Gastrocnemius medialis (tissue), 4 donors: ENCODE measurements at regions of chr1 and their contacts with region 1.

Region 1: GRCh38 chr1:30525971-30526651 is 197.3 kb downstream of the MATN1 start:
- DNase-seq: peak; percentile 89 to 94
- ATAC-seq: peak; percentile 50 to 53
- H3K4me3 ChIP-seq: no peak overlapping the region
- H3K27ac ChIP-seq: peak overlapping the region; percentile 89 to 99 (median 93)
- H3K4me1 ChIP-seq: peaks cover 57 to 59% of the 10 kb centered on the region in 2 donors
- H3K27me3 ChIP-seq: no peaks in the 10 kb centered on the region
- CTCF ChIP-seq: peak in 1 of 5 experiments; percentile 16
- POLR2A ChIP-seq: peak; percentile 45 to 73

Region 2: GRCh38 chr1:29181413-29182225 is 1344.5 kb before region 1 on chr1 and contains the start of gene SRSF4:
- in situ Hi-C with region 1: no loop called
- intact Hi-C with region 1: loop called (anchors 5 kb)
- DNase-seq: peak; percentile 99
- ATAC-seq: peak; percentile 90 to 92
- H3K4me3 ChIP-seq: peak within 1 kb of the TSS; percentile 78 to 98 (median 82)
- H3K27ac ChIP-seq: peak within 1 kb of the TSS; percentile 94 to 100 (median 97)
- H3K4me1 ChIP-seq: peaks cover 40 to 48% of the 10 kb centered on the region in 2 donors
- H3K27me3 ChIP-seq: no peaks in the 10 kb centered on the region
- CTCF ChIP-seq: peak; percentile 57 to 81 (median 74)
- POLR2A ChIP-seq: peak; percentile 95 to 98
- total RNA-seq, gene SRSF4: 42.4 to 72.5 (median 65.4) TPM

Region 3: GRCh38 chr1:29569971-29570634 is 956.0 kb before region 1 on chr1:
- in situ Hi-C with region 1: no loop called
- intact Hi-C with region 1: loop called (anchors 10 kb)
- DNase-seq: peak; percentile 43 to 84
- ATAC-seq: peak; percentile 97
- H3K4me3 ChIP-seq: no peak overlapping the region
- H3K27ac ChIP-seq: peak overlapping the region in 2 of 4 donors; percentile 59 to 61
- H3K4me1 ChIP-seq: peaks cover 0 to 4% of the 10 kb centered on the region in 2 donors
- H3K27me3 ChIP-seq: peaks cover 0 to 2% (median 0%) of the 10 kb centered on the region in 3 donors
- CTCF ChIP-seq: no peak
- POLR2A ChIP-seq: no peak

Region 4: GRCh38 chr1:30058632-30059574 is 467.2 kb before region 1 on chr1:
- in situ Hi-C with region 1: no loop called
- intact Hi-C with region 1: no loop called
- DNase-seq: no peak
- ATAC-seq: no peak
- H3K4me3 ChIP-seq: no peak overlapping the region
- H3K27ac ChIP-seq: no peak overlapping the region
- H3K4me1 ChIP-seq: no peaks in the 10 kb centered on the region
- H3K27me3 ChIP-seq: peaks cover under 1 to 16% (median 2%) of the 10 kb centered on the region in 3 donors
- CTCF ChIP-seq: no peak
- POLR2A ChIP-seq: no peak

Region 5: GRCh38 chr1:30145723-30146303 is 380.3 kb before region 1 on chr1:
- in situ Hi-C with region 1: no loop called
- intact Hi-C with region 1: no loop called
- DNase-seq: no peak
- ATAC-seq: no peak
- H3K4me3 ChIP-seq: no peak overlapping the region
- H3K27ac ChIP-seq: no peak overlapping the region
- H3K4me1 ChIP-seq: no peaks in the 10 kb centered on the region
- H3K27me3 ChIP-seq: peaks cover 0 to 5% (median 3%) of the 10 kb centered on the region in 3 donors
- CTCF ChIP-seq: no peak
- POLR2A ChIP-seq: no peak

Region 6: DNA sequence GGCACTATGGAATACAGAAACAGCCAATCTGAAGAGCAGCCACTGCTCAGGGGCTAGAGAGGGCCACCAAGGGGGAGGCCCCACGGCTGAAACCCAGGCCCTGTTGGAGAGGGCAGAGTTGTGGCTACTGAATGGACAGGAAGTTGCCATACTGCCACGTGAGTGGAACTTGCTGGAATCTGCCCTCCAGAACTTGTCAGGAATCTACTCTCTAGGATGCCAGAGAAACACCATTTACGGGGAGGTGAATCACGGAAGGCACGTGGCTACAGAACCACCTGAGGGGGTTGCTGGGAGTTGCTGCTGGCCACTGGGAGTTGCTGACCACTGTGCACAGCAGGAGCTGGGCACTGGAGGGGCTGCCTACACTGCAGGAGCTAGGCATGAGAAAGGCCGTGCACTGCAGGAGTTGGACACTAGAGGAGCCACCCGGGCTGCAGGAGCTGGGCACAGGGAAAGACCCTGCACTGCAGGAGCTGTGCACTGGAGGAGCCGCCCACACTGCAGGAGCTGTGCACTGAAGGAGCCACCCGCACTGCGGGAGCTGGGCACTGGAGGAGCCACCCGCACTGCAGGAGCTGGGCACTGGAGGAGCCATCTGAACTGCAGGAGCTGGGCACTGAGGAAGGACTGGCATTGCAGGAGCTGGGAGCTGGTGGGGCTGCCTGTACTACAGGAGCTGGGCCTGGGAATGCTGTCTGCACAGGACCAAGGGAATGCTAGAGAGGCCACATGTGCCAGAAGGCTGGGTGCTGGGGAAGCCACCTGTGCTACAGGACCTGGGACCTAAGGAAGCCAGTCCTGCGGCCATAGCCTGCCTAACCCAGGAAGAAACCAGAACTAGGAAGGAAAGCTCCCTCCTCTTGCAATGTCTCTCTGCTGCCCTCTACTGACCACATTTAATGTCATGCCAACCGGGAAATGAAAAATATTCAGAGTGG is 146.2 kb before region 1 on chr1:
- in situ Hi-C with region 1: no loop called
- intact Hi-C with region 1: loop called (anchors 5 kb)
- DNase-seq: peak; percentile 18 to 31
- ATAC-seq: peak; percentile 76 to 79
- H3K4me3 ChIP-seq: no peak overlapping the region
- H3K27ac ChIP-seq: no peak overlapping the region
- H3K4me1 ChIP-seq: peaks cover 4 to 6% of the 10 kb centered on the region in 2 donors
- H3K27me3 ChIP-seq: no peaks in the 10 kb centered on the region
- CTCF ChIP-seq: peak; percentile 63 to 86 (median 77)
- POLR2A ChIP-seq: no peak

Region 7: DNA sequence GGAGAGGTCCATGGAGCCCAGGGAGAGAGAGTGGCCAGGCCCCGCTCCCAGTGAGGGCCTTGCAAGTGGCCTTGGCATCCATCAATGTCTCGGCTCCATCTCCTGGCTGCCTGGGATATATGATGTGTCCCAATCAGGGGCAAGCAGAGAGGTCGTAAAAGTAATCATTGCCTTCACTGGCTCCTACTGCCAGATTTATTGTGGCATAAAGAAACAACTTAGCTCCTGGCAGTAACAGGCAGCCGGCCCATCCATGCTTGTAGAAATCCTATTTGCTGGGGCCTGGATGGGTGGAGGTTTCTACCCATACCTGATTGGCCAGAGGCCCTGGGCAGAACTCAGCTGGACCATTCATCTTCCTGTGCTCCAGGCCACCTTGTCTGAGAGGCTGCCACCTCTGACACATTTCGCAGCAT is 75.3 kb before region 1 on chr1:
- in situ Hi-C with region 1: no loop called
- intact Hi-C with region 1: no loop called
- DNase-seq: no peak
- ATAC-seq: no peak
- H3K4me3 ChIP-seq: no peak overlapping the region
- H3K27ac ChIP-seq: no peak overlapping the region
- H3K4me1 ChIP-seq: no peaks in the 10 kb centered on the region
- H3K27me3 ChIP-seq: no peaks in the 10 kb centered on the region
- CTCF ChIP-seq: no peak
- POLR2A ChIP-seq: no peak

Region 8: GRCh38 chr1:30718636-30719405 is 192.7 kb after region 1 on chr1:
- in situ Hi-C with region 1: no loop called
- intact Hi-C with region 1: loop called (anchors 5 kb)
- DNase-seq: peak; percentile 71 to 94
- ATAC-seq: peak; percentile 79 to 81
- H3K4me3 ChIP-seq: peak overlapping the region; percentile 60 to 85 (median 73)
- H3K27ac ChIP-seq: peak overlapping the region; percentile 97 to 98 (median 98)
- H3K4me1 ChIP-seq: peaks cover 0 to 3% of the 10 kb centered on the region in 2 donors
- H3K27me3 ChIP-seq: no peaks in the 10 kb centered on the region
- CTCF ChIP-seq: peak; percentile 98 to 100 (median 99)
- POLR2A ChIP-seq: peak; percentile 80 to 85

Region 9: DNA sequence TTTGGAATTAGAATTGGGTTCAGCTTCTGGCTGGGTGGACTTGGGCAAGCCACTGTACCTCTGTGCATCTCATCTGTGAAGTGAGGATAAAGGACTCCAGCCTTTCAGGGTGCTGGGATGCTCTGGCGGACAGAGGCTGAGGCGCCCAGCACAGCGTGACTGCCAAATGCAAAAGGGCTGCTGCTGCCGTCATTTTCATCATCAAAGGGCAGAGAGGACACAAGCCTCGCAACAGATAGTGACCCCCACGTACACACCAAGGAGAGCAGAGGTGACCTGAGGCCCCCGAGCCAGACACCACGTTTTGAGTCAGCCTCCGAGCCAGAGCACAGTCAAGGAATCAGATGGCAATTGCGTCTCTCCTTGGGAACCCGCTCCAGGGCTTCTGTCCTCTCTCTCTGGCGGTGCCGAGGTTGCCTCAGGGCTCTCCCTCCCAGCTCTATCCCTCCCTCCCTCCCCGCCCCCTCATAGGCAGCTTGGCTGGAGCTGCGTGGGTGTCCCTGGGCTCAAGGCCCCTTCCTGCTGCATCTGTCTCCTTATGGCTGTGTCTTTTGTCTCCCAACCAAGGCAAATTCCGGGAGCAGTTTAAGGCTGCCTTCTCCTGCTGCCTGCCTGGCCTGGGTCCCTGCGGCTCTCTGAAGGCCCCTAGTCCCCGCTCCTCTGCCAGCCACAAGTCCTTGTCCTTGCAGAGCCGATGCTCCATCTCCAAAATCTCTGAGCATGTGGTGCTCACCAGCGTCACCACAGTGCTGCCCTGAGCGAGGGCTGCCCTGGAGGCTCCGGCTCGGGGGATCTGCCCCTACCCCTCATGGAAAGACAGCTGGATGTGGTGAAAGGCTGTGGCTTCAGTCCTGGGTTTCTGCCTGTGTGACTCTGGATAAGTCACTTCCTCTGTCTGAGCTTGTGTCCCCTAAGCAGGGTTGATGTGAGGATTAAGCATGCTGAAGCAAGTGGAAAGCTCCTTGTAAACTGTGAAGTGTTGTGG is 1100.4 kb after region 1 on chr1:
- in situ Hi-C with region 1: no loop called
- intact Hi-C with region 1: loop called (anchors 2 kb)
- DNase-seq: peak; percentile 49 to 81
- ATAC-seq: peak; percentile 35 to 42
- H3K4me3 ChIP-seq: no peak overlapping the region
- H3K27ac ChIP-seq: peak overlapping the region; percentile 89 to 99 (median 97)
- H3K4me1 ChIP-seq: peaks cover 39 to 47% of the 10 kb centered on the region in 2 donors
- H3K27me3 ChIP-seq: no peaks in the 10 kb centered on the region
- CTCF ChIP-seq: no peak
- POLR2A ChIP-seq: peak in 1 of 2 donors; percentile 8